Common myeloid progenitor, CD34-positive (primary cell): ENCODE measurements at regions of chr3 and their contacts with region 1.

Region 1: DNA sequence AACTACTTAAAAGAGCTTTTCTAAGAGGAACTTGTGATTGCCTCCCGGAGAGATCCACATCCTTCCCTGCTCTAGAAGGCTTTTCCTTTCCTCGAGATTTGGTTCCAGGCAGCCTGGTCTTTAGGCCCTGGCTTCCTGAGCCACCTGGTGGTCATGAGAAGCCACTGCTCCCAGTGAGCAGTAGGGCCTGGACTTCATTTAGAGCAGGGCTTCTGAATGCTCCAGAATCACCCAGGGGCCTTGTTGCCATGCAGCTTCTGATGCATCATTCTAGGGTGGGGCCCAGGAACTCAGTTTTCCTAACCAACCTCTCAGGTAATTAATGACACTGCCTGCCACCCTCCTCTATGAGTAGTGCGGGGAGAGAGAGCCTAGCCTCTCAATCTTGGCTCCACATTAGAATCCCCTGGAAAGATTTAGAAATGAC is 29.6 kb downstream of the PSMD6 start:
- DNase-seq: peak; percentile 67 to 78 (median 76)
- H3K4me3 ChIP-seq: no peak overlapping the region
- H3K27ac ChIP-seq: no peak overlapping the region
- H3K4me1 ChIP-seq: no peaks in the 10 kb centered on the region
- H3K27me3 ChIP-seq: no peaks in the 10 kb centered on the region

Region 2: GRCh38 chr3:63975723-63976122 is 17.9 kb before region 1 on chr3:
- CTCF ChIA-PET with region 1: interaction called, 177 read pairs
- POLR2A ChIA-PET with region 1: no interaction called
- DNase-seq: no peak
- H3K4me3 ChIP-seq: no peak overlapping the region
- H3K27ac ChIP-seq: no peak overlapping the region
- H3K4me1 ChIP-seq: peaks cover 17 to 56% (median 37%) of the 10 kb centered on the region in 4 experiments
- H3K27me3 ChIP-seq: no peaks in the 10 kb centered on the region